Sigmoid colon (tissue), 7 donors: ENCODE measurements at regions of chr3 and their contacts with region 1.

Region 1: GRCh38 chr3:42652611-42653302 is 740 bp upstream of the ZBTB47 start:
- DNase-seq: peak; percentile 85
- H3K4me3 ChIP-seq: peak overlapping the region; percentile 74 to 96 (median 85)
- H3K27ac ChIP-seq: peak overlapping the region; percentile 93 to 98 (median 96)
- H3K4me1 ChIP-seq: peaks cover 0 to 78% (median 64%) of the 10 kb centered on the region in 4 donors
- H3K27me3 ChIP-seq: no peaks in the 10 kb centered on the region
- CTCF ChIP-seq: no peak
- EP300 ChIP-seq: no peak
- POLR2A ChIP-seq: peak; percentile 63 to 68

Region 2: GRCh38 chr3:42518800-42519567 is 133.8 kb before region 1 on chr3:
- intact Hi-C with region 1: no loop called
- DNase-seq: no peak
- H3K4me3 ChIP-seq: no peak overlapping the region
- H3K27ac ChIP-seq: no peak overlapping the region
- H3K4me1 ChIP-seq: no peaks in the 10 kb centered on the region
- H3K27me3 ChIP-seq: no peaks in the 10 kb centered on the region
- CTCF ChIP-seq: no peak
- EP300 ChIP-seq: no peak
- POLR2A ChIP-seq: no peak

Region 3: DNA sequence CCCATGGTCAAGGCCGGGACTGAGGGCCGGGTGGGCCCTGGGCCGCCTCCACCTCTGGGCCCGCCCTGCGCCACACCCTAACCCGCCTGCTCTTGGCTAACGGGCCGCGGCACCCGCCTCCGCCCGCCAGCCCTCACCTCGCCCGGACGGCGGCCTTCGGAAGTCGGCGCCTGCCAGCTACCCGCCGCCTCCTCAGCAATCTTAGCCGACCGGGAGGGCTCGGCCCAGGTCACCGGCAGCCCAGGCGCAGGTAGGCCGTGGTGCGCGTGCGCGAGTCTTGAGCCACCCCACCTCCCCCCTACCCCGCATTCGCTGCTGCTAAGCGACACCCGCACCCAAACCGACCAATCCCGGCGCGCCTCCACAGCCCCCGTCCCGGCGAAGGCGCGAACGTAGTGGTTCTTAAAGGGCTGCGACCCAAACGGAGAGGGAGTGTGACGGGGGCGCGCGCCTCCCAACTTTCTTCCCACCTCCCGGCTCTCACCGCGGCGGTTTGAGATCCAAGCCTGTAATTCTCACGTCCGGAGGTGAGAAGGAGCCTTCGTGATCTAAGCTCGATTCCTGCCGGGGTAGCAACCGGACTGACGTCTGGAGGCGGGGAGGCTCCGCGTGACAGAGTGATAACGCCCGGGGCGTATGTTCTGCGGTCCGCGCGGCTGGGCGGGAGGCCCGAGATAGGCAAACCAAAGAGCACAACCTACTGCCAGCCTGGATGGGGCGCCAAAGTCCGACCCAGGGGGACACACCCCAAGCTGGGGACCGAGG is 70.9 kb before region 1 on chr3 and contains the start of gene SEC22C:
- intact Hi-C with region 1: loop called (anchors 5 kb)
- DNase-seq: peak; percentile 98
- H3K4me3 ChIP-seq: peak within 1 kb of the TSS; percentile 56 to 97 (median 86)
- H3K27ac ChIP-seq: peak within 1 kb of the TSS; percentile 87 to 93 (median 90)
- H3K4me1 ChIP-seq: peaks cover 0 to 26% (median 20%) of the 10 kb centered on the region in 4 donors
- H3K27me3 ChIP-seq: no peaks in the 10 kb centered on the region
- CTCF ChIP-seq: no peak
- EP300 ChIP-seq: no peak
- POLR2A ChIP-seq: peak; percentile 58 to 67
- total RNA-seq, gene SEC22C: 48.5 to 89.2 (median 57.2) TPM

Region 4: DNA sequence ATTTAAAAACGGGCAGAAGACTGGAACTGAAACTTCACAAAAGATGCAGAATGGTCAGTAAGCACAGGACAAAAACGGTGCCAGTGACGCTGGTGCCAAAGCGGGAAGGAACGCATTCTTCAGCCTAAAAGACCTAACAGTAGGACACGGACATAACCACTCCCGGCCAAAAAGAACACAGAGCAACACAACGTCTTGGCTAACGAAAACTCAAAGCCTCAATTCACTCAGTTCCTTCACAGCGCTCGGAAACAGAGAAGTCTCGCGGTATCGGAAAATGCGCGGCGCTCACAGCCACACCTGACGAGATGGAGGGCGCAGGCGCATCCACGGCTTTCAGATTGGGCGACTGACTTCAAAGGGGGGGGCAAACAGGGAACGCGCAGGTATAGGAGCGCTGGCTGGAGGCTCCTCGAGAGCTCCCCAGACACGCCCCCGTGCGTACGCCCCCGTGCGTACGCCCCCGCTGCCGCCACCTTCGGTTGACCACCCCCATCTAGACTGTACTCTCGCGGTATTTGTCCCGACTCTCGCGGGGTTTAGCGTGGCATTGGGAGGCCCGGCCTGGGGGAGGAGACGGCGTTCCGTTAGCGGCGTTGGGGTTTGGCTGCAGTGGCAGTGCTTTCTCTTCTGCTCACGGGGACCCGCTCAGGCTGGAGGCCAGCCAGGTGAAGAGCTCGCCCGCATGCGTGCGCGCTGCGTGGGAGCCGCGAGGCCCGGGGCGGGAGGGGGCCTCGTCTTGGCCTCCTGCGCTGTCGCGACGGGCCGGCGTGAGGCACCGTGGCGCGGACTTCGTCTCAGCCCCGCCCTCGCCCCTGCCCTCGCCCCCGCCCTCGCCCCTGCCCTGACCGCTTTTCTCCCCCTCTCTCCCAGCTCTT is 52.4 kb before region 1 on chr3 and contains the start of gene NKTR:
- intact Hi-C with region 1: loop called (anchors 2 kb)
- DNase-seq: peak; percentile 98
- H3K4me3 ChIP-seq: peak within 1 kb of the TSS; percentile 70 to 89 (median 86)
- H3K27ac ChIP-seq: peak within 1 kb of the TSS; percentile 94 to 98 (median 96)
- H3K4me1 ChIP-seq: peaks cover 0 to 27% (median 24%) of the 10 kb centered on the region in 4 donors
- H3K27me3 ChIP-seq: no peaks in the 10 kb centered on the region
- CTCF ChIP-seq: no peak
- EP300 ChIP-seq: no peak
- POLR2A ChIP-seq: peak; percentile 84 to 89
- total RNA-seq, gene NKTR: 81.3 to 130 (median 84.4) TPM

Region 5: DNA sequence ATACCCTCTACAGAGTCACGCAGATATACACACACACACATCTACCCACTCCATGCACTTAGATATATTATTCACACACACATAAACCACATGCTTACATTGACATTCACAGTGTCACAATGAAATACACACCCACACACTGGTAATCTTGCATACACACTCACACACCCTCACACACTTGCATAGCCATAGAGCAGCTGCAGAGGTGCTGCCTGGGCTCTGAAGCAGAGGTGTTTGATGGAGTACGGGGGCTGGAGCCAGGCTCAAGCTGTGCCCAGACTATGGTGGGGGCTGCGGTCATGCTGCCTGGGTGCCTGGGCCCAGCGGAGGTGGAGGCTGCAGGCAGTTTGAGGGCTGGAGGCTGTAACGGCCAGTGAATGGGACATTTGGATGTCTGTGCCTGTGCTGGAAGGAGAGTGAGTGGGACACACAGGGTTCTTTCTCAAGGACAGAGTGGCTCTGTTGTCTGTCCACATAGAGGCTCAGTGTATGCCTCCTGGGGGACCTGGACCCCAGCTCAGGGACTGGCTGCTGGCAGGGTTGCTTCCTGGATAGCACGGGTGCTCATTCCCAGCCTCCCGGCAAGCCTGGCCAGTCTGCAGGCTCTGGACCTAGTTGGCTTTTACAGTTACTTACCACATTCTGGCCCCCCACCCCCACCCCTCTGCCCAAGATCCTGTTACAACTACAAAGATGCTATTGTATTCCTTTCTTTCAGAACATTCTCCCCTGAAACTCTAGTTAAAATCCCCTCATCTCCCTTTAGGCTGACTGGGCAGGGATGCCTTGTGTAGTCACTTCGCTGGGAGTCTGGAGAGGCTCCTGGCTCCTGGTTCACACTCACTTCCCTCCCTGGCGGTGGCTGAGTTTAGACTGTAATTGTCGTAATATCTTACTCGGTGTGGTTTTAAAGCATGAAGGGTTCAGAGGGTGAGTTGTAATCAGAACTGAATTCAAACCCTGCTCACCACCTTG is 338.9 kb after region 1 on chr3:
- intact Hi-C with region 1: no loop called
- DNase-seq: no peak
- H3K4me3 ChIP-seq: no peak overlapping the region
- H3K27ac ChIP-seq: peak overlapping the region in 3 of 4 donors; percentile 8 to 25 (median 12)
- H3K4me1 ChIP-seq: peaks cover 0 to 11% (median 5%) of the 10 kb centered on the region in 4 donors
- H3K27me3 ChIP-seq: no peaks in the 10 kb centered on the region
- CTCF ChIP-seq: no peak
- EP300 ChIP-seq: no peak
- POLR2A ChIP-seq: no peak